Transverse colon (tissue), 4 donors: ENCODE measurements at regions of chr5 and their contacts with region 1.

Region 1: DNA sequence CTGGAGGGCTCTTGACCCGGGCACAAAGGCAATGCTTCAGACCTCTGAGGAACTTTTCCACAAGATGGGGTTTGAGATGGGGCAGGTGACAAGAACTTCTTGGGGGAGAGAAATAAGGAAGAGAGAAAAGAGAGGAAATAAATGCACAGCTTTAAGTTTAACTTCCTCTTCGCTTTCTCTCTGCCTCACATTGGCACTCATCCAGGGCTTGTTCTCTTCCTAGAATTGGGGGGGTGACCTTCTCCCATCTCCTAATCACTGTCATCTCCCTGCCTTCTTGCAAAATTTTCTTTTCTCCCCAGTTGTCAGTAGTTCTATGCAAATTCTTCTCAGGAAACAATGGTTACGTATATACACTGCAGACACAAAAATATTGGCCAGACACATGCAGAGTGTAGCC is 19.1 kb upstream of the ADCY2 start:
- DNase-seq: no peak
- H3K4me3 ChIP-seq: no peak overlapping the region
- H3K27ac ChIP-seq: no peak overlapping the region
- H3K4me1 ChIP-seq: no peaks in the 10 kb centered on the region
- H3K27me3 ChIP-seq: no peaks in the 10 kb centered on the region
- CTCF ChIP-seq: no peak
- EP300 ChIP-seq: no peak
- POLR2A ChIP-seq: no peak

Region 2: GRCh38 chr5:7592910-7593309 is 216.0 kb after region 1 on chr5:
- in situ Hi-C with region 1: no loop called
- intact Hi-C with region 1: no loop called
- DNase-seq: no peak
- H3K4me3 ChIP-seq: no peak overlapping the region
- H3K27ac ChIP-seq: no peak overlapping the region
- H3K4me1 ChIP-seq: no peaks in the 10 kb centered on the region
- H3K27me3 ChIP-seq: no peaks in the 10 kb centered on the region
- CTCF ChIP-seq: peak in 1 of 5 experiments; percentile 28
- EP300 ChIP-seq: no peak
- POLR2A ChIP-seq: no peak

Region 3: GRCh38 chr5:8908055-8908683 is 1531.3 kb after region 1 on chr5:
- in situ Hi-C with region 1: no loop called
- intact Hi-C with region 1: loop called (anchors 5 kb)
- DNase-seq: peak; percentile 26
- H3K4me3 ChIP-seq: no peak overlapping the region
- H3K27ac ChIP-seq: no peak overlapping the region
- H3K4me1 ChIP-seq: no peaks in the 10 kb centered on the region
- H3K27me3 ChIP-seq: no peaks in the 10 kb centered on the region
- CTCF ChIP-seq: peak; percentile 42 to 87 (median 51)
- EP300 ChIP-seq: no peak
- POLR2A ChIP-seq: no peak